AG04450 (cell line): ENCODE measurements at regions of chr5 and their contacts with region 1.

Region 1: GRCh38 chr5:10233505-10233904 is 16.2 kb downstream of the ATPSCKMT start:
- DNase-seq: peak; percentile 84
- H3K4me3 ChIP-seq: no peak overlapping the region
- H3K27ac ChIP-seq: peak overlapping the region; percentile 39
- H3K27me3 ChIP-seq: no peaks in the 10 kb centered on the region
- CTCF ChIP-seq: peak; percentile 48

Region 2: GRCh38 chr5:9774472-9775079 is 458.9 kb before region 1 on chr5:
- CTCF ChIA-PET with region 1: interaction called, 11 read pairs
- POLR2A ChIA-PET with region 1: no interaction called
- DNase-seq: peak; percentile 58
- H3K4me3 ChIP-seq: no peak overlapping the region
- H3K27ac ChIP-seq: no peak overlapping the region
- H3K27me3 ChIP-seq: no peaks in the 10 kb centered on the region
- CTCF ChIP-seq: peak; percentile 54

Region 3: DNA sequence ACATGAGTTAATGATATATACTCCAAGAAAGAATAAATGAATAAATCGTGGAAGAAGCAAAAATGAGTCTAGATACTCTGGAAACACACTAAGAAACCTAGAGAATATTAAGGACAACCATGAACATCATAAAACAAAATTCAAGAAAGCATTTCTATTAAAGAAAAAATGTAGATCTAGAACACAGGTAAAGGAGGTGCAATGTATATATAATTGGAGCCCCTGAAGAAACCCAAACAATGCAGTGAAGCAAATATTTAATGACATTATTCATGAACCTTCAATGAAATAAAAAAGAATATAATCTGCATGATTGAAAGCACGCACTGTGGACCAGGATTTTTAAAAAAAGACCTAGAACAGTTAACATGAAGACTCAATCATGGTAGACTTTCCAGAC is 134.0 kb before region 1 on chr5:
- CTCF ChIA-PET with region 1: no interaction called
- POLR2A ChIA-PET with region 1: no interaction called
- DNase-seq: no peak
- H3K4me3 ChIP-seq: no peak overlapping the region
- H3K27ac ChIP-seq: no peak overlapping the region
- H3K27me3 ChIP-seq: peaks cover under 1% of the 10 kb centered on the region
- CTCF ChIP-seq: no peak

Region 4: GRCh38 chr5:10249948-10250803 is 16.7 kb after region 1 on chr5 and contains the start of gene CCT5:
- CTCF ChIA-PET with region 1: interaction called, 3 read pairs
- POLR2A ChIA-PET with region 1: interaction called, 13 read pairs
- DNase-seq: peak; percentile 98
- H3K4me3 ChIP-seq: peak within 1 kb of the TSS; percentile 98
- H3K27ac ChIP-seq: peak within 1 kb of the TSS; percentile 94
- H3K27me3 ChIP-seq: no peaks in the 10 kb centered on the region
- CTCF ChIP-seq: no peak
- polyA plus RNA-seq, gene CCT5: 344 and 390 TPM in 2 replicates